ENCODE measurements at regions of chr10 and their contacts with region 1.

Region 1: DNA sequence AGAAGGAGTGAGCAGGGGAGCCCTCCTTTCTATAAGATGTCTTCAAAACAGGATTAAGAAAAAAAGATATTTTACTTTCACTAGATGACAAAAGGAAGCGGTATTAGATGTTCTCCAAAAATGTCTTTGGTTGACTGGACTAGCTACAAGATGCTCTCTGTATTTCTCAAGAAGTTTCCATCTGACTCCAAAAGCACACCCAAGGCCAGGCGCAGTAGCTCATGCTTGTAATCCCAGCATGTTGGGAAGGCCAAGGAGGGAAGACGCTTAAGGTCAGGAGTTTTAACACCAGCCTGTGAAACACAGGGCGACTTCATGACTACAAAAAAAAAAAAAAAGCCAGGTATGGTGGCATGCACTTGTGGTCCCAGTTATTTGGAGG is 84.5 kb downstream of the PIP4K2A start:
- DNase-seq: no peak
- ATAC-seq: no peak
- H3K4me3 ChIP-seq: no peak overlapping the region
- H3K27ac ChIP-seq: no peak overlapping the region
- H3K4me1 ChIP-seq: peaks cover 1 to 6% of the 10 kb centered on the region in 2 donors
- H3K27me3 ChIP-seq: no peaks in the 10 kb centered on the region

Region 2: DNA sequence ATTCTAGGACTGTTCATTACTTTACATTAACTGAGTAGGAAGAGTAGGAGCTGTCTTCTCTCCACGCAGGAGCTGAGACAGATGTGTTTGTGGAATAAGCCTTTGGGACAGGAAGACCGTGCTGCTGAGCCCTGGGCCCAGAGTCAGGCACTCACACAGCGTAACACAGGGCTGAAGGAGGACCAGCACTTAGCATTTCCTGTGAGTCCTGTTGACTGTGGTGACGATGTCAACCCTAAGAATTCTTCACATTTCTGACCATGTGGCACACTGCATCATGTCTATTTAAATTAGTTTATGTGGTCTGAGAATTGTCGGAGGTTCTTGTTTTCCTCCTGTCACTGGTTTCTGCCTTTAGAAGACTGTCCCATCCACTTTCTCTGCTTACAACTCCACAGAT is 32.7 kb before region 1 on chr10:
- intact Hi-C with region 1: no loop called
- DNase-seq: no peak
- ATAC-seq: no peak
- H3K4me3 ChIP-seq: no peak overlapping the region
- H3K27ac ChIP-seq: no peak overlapping the region
- H3K4me1 ChIP-seq: peaks cover 0 to 4% of the 10 kb centered on the region in 2 donors
- H3K27me3 ChIP-seq: no peaks in the 10 kb centered on the region

Region 3: DNA sequence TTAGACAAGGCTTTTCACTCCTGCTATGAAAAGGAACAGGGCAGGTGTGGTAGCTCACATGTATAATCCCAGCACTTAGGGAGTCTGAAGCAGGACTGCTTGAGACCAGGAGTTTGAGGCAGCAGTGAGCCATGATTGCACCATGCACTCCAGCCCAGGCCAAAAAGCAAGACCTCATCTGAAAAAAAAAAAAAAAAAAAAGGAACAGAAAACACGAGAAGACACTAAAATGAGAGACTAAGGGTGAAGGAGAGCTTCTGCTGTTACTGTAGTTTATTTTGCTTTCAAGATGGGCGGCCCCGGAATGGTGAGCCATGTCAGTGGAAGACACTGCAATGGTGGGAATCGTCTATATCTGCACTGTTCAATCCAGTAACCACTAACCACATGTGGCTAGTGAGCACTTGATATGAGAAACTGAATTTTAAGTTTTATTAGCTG is 74.6 kb after region 1 on chr10:
- intact Hi-C with region 1: loop called in 1 of 2 experiments (anchors 5 kb)
- DNase-seq: no peak
- ATAC-seq: no peak
- H3K4me3 ChIP-seq: no peak overlapping the region
- H3K27ac ChIP-seq: no peak overlapping the region
- H3K4me1 ChIP-seq: peaks cover 2 to 7% of the 10 kb centered on the region in 2 donors
- H3K27me3 ChIP-seq: no peaks in the 10 kb centered on the region

Measured in aorta (tissue), 5 donors.